ENCODE measurements at regions of chr1 and their contacts with region 1.

Region 1: DNA sequence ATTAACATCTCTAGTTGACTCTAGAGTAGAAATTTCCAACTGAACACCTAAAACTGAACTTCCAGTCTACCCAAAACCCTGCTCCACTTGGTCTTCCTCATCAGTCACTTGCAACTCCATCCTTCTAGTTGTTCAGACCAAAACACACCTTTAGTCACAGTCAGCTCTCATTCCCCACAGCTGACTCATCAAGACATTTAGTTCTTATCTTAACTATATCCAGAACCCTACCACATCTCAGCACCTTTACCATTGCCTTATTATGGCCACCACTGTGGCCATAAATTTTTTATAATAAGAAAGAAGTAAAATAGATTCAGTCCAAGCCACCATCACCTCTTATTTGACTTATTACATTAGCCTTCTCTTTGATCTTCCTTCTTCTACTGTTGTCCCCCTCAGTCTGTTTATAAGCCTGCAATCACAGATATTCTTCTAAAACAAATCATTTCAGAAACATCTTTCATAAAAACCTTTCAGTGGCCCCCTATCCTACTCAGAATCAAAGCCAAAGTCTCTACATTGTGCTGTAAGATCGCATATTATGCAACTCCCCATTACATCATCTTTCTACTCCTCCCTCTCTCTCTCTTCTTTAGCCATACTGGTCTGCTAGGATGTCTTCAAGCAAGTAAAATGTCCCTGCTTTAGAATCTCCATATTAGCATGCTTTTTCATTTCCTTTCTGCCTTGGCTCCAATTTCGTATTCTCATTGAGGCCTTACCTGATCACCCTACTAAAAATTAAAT is 275.9 kb downstream of the LRRC40 start:
- DNase-seq: no peak
- ATAC-seq: no peak
- H3K4me3 ChIP-seq: no peak overlapping the region
- H3K4me3 Mint-ChIP-seq: no peak overlapping the region
- H3K27ac ChIP-seq: no peak overlapping the region
- H3K27ac Mint-ChIP-seq: no peak overlapping the region
- H3K4me1 ChIP-seq: no peaks in the 10 kb centered on the region
- H3K4me1 Mint-ChIP-seq: no peaks in the 10 kb centered on the region
- H3K27me3 ChIP-seq: no peaks in the 10 kb centered on the region
- H3K27me3 Mint-ChIP-seq: no peaks in the 10 kb centered on the region
- CTCF ChIP-seq: no peak

Region 2: DNA sequence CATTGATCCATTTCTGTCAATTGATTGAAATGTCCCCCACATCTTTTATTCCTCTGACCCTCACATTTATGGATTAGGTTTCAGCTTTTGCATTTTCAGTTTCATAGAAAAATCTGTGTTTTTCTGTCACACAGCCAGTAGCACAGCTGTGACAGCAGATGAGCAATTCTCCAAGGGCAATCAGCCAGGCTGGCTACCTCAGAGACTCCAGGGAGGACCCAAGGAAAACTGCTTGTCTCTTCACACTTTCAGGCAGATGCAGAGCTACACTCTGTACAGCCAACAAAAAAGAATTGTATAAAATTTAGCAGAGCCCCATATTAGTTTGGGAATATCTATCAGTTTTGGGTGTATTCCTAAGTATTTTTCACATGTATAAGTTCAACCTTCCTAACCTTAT is 104.6 kb before region 1 on chr1:
- CTCF ChIA-PET with region 1: no interaction called
- POLR2A ChIA-PET with region 1: no interaction called
- intact Hi-C with region 1: no loop called
- DNase-seq: no peak
- ATAC-seq: no peak
- H3K4me3 ChIP-seq: no peak overlapping the region
- H3K4me3 Mint-ChIP-seq: no peak overlapping the region
- H3K27ac ChIP-seq: no peak overlapping the region
- H3K27ac Mint-ChIP-seq: no peak overlapping the region
- H3K4me1 ChIP-seq: no peaks in the 10 kb centered on the region
- H3K4me1 Mint-ChIP-seq: no peaks in the 10 kb centered on the region
- H3K27me3 ChIP-seq: no peaks in the 10 kb centered on the region
- H3K27me3 Mint-ChIP-seq: no peaks in the 10 kb centered on the region
- CTCF ChIP-seq: no peak

Region 3: DNA sequence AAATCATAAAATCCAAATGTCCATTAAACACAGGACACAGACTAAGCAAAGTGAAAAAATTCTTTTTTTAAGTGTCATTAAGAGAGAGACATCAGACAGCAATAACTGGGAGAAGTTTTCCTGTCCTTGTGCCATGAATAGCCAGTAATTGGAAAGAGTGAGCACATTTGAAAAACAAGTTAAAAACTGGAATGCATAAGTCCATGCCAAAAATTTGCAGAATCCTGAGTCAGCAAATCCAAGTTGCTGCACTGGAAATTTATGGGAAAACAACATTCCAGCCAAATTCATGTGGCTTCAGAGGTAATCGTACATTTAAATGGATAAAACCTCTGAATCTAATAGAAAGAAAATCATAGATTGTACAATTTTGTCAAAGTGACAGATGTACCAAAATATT is 15.5 kb before region 1 on chr1:
- CTCF ChIA-PET with region 1: no interaction called
- POLR2A ChIA-PET with region 1: no interaction called
- intact Hi-C with region 1: no loop called
- DNase-seq: no peak
- ATAC-seq: no peak
- H3K4me3 ChIP-seq: no peak overlapping the region
- H3K4me3 Mint-ChIP-seq: no peak overlapping the region
- H3K27ac ChIP-seq: no peak overlapping the region
- H3K27ac Mint-ChIP-seq: no peak overlapping the region
- H3K4me1 ChIP-seq: no peaks in the 10 kb centered on the region
- H3K4me1 Mint-ChIP-seq: no peaks in the 10 kb centered on the region
- H3K27me3 ChIP-seq: no peaks in the 10 kb centered on the region
- H3K27me3 Mint-ChIP-seq: no peaks in the 10 kb centered on the region
- CTCF ChIP-seq: no peak

Region 4: DNA sequence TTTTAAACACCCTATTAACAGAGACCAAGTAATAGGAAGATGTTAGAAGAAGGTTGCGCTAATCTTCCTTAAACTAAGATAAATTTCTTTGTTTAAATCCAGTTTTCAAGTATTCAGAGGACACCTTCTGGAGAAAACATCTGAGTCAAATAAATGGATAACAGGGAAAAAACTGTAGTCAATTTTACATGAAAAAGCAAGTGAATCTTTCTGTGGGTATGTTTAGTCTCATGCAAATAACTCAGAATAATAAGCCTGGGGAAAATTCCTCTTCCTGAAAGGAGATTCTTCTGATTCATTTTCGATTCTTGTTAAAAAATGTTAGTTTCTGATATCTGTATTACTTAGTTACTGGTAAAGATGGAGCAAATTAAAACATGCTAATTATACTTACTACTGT is 627.1 kb after region 1 on chr1:
- CTCF ChIA-PET with region 1: no interaction called
- POLR2A ChIA-PET with region 1: no interaction called
- intact Hi-C with region 1: no loop called
- DNase-seq: no peak
- ATAC-seq: no peak
- H3K4me3 ChIP-seq: no peak overlapping the region
- H3K4me3 Mint-ChIP-seq: no peak overlapping the region
- H3K27ac ChIP-seq: no peak overlapping the region
- H3K27ac Mint-ChIP-seq: no peak overlapping the region
- H3K4me1 ChIP-seq: no peaks in the 10 kb centered on the region
- H3K4me1 Mint-ChIP-seq: no peaks in the 10 kb centered on the region
- H3K27me3 ChIP-seq: no peaks in the 10 kb centered on the region
- H3K27me3 Mint-ChIP-seq: peaks cover 2% of the 10 kb centered on the region
- CTCF ChIP-seq: no peak

Region 5: DNA sequence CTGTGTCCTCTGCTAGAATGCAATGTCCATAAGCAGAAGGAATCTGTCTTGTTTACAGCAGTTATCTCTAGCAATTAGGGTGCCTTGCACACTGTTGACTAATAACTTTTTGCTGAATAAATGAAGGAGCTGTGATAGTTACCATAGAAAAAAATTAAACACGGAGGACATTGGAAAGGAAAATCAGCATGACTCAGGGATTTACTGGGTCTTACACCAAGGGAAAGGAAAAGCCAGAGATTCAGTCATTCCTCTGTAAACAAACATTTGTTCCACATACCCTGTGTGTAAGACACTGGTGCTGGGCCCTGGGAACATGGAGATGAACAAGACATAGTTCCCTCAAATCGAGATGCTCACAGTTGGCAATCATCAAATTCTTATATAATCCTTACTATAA is 934.8 kb after region 1 on chr1:
- CTCF ChIA-PET with region 1: no interaction called
- POLR2A ChIA-PET with region 1: no interaction called
- intact Hi-C with region 1: loop called in 1 of 2 experiments (anchors 5 kb)
- DNase-seq: no peak
- ATAC-seq: no peak
- H3K4me3 ChIP-seq: no peak overlapping the region
- H3K4me3 Mint-ChIP-seq: no peak overlapping the region
- H3K27ac ChIP-seq: no peak overlapping the region
- H3K27ac Mint-ChIP-seq: no peak overlapping the region
- H3K4me1 ChIP-seq: peaks cover 4% of the 10 kb centered on the region
- H3K4me1 Mint-ChIP-seq: peaks cover 24% of the 10 kb centered on the region
- H3K27me3 ChIP-seq: no peaks in the 10 kb centered on the region
- H3K27me3 Mint-ChIP-seq: peaks cover 3% of the 10 kb centered on the region
- CTCF ChIP-seq: no peak

Measured in CD8-positive, alpha-beta T cell (primary cell).